HCT116 (cell line): ENCODE measurements at regions of chr10 and their contacts with region 1.

Region 1: GRCh38 chr10:58064714-58065528 is 202.8 kb downstream of the IPMK start:
- DNase-seq: peak; percentile 19
- ATAC-seq: peak; percentile 67
- H3K4me3 ChIP-seq: no peak overlapping the region
- H3K27ac ChIP-seq: no peak overlapping the region
- H3K4me1 ChIP-seq: no peaks in the 10 kb centered on the region
- H3K27me3 ChIP-seq: no peaks in the 10 kb centered on the region
- CTCF ChIP-seq: peak; percentile 16 to 68 (median 66); a peak in 4 of 6 replicates
- POLR2A ChIP-seq: no peak
- RAD21 ChIP-seq: peak; percentile 70

Region 2: GRCh38 chr10:57657164-57657765 is 407.7 kb before region 1 on chr10:
- CTCF ChIA-PET with region 1: interaction called, 7 read pairs
- POLR2A ChIA-PET with region 1: no interaction called
- RAD21 ChIA-PET with region 1: no interaction called
- intact Hi-C with region 1: loop called (anchors 10 kb)
- DNase-seq: peak; percentile 13
- ATAC-seq: peak; percentile 62; the same call in 1 of the 2 replicates
- H3K4me3 ChIP-seq: no peak overlapping the region
- H3K27ac ChIP-seq: no peak overlapping the region
- H3K4me1 ChIP-seq: no peaks in the 10 kb centered on the region
- H3K27me3 ChIP-seq: no peaks in the 10 kb centered on the region
- CTCF ChIP-seq: peak in 2 of 3 experiments; percentile 55 to 61; a peak in 4 of 6 replicates
- POLR2A ChIP-seq: no peak
- RAD21 ChIP-seq: peak; percentile 41

Region 3: DNA sequence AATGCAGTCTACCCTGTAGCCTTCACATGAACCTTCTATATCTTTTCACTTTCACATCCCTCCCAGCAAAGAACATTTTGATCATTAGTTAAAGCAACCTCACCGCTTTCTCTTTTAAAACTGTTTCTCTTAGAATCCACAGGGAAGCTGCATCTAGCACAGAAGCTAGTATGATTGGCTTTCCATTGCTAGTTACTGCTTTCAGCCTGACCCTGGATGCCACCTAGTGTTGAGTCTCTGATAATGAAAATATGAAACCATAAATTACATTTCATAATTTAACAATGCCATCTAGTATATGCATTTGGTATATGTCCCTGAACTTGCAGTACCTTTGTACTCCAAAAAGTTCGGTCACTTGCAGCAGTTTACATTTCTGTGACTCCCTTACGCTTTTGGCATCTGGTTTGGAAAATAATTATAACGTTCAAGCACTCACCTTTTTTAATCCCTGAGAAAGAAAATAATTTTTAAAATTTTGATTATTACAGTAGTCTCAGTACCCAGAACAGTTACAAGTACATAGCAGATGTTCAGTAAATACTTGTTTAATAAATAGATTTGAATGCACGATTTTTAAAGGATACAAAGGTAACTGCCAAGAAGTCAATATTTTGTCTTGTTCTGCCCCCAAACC is 226.7 kb after region 1 on chr10:
- CTCF ChIA-PET with region 1: no interaction called
- POLR2A ChIA-PET with region 1: no interaction called
- RAD21 ChIA-PET with region 1: no interaction called
- intact Hi-C with region 1: no loop called
- DNase-seq: peak; percentile 24
- ATAC-seq: peak; percentile 79
- H3K4me3 ChIP-seq: no peak overlapping the region
- H3K27ac ChIP-seq: no peak overlapping the region
- H3K4me1 ChIP-seq: no peaks in the 10 kb centered on the region
- H3K27me3 ChIP-seq: no peaks in the 10 kb centered on the region
- CTCF ChIP-seq: peak; percentile 65 to 82 (median 73)
- POLR2A ChIP-seq: no peak
- RAD21 ChIP-seq: peak; percentile 83